Psoas muscle (tissue), 8 donors: ENCODE measurements at regions of chr3 and their contacts with region 1.

Region 1: DNA sequence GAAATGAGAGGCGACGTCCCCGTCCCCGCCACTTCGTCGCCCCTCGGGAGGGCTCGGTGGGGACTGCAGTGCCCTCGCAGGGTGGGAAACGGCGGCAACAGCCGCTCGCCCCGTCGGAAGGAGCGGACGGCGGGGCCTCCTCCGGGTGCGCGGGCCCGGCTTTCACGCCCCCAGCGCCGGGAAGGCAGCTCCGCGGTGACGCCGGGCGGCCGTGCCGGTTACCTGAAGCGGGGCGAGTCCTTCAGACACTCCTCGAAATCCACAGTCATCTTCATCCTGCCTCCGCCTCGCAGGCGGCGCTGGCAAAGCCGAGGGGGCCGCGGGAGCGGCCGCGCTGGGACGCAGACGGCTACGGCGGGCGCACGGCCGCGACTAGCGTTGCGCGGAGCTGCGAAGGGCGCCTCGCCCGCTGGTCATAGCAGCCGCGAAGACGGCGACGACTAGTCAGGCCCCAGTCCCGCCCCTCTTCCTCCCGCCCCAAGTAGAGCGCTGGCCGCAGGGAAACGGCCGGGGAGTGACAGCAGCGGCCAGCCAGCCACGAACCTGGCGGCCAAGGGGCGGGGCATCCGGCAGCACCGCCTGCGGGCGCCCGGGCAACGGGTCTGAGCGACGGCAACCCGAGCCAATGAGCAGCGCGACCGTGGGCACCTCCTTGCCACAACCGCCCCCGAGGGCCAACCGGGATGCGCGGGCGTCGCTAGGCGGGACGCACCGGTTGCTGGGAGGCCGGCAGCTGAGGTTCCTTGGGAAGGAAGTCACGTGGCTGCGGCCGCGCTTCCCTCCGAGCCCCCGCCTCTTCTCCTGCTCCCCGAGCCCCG is at the start of gene ACAP2:
- DNase-seq: peak; percentile 100
- ATAC-seq: peak; percentile 96 to 98 (median 98)
- H3K4me3 ChIP-seq: peak within 1 kb of the TSS; percentile 98
- H3K27ac ChIP-seq: peak within 1 kb of the TSS; percentile 97
- H3K4me1 ChIP-seq: peaks cover 18% of the 10 kb centered on the region
- H3K27me3 ChIP-seq: no peaks in the 10 kb centered on the region
- CTCF ChIP-seq: no peak
- total RNA-seq, gene ACAP2: 10.2 to 12.5 (median 11.2) TPM

Region 2: GRCh38 chr3:195271116-195271858 is 171.5 kb before region 1 on chr3 and contains the start of gene XXYLT1:
- intact Hi-C with region 1: loop called in 1 of 2 experiments (anchors 2 kb)
- DNase-seq: peak; percentile 92 to 94
- ATAC-seq: peak; percentile 96 to 98 (median 98)
- H3K4me3 ChIP-seq: peak within 1 kb of the TSS; percentile 83
- H3K27ac ChIP-seq: peak within 1 kb of the TSS; percentile 83
- H3K4me1 ChIP-seq: peaks cover 12% of the 10 kb centered on the region
- H3K27me3 ChIP-seq: no peaks in the 10 kb centered on the region
- CTCF ChIP-seq: peak; percentile 80
- total RNA-seq, gene XXYLT1: 1.8 to 3.5 (median 2.3) TPM

Region 3: GRCh38 chr3:195394024-195394423 is 48.8 kb before region 1 on chr3:
- intact Hi-C with region 1: loop called in 1 of 2 experiments (anchors 5 kb)
- DNase-seq: no peak
- ATAC-seq: no peak
- H3K4me3 ChIP-seq: no peak overlapping the region
- H3K27ac ChIP-seq: peak overlapping the region; percentile 28
- H3K4me1 ChIP-seq: peaks cover 23% of the 10 kb centered on the region
- H3K27me3 ChIP-seq: no peaks in the 10 kb centered on the region
- CTCF ChIP-seq: no peak

Region 4: GRCh38 chr3:195522254-195523023 is 79.7 kb after region 1 on chr3:
- intact Hi-C with region 1: loop called in 1 of 2 experiments (anchors 5 kb)
- DNase-seq: no peak
- ATAC-seq: no peak
- H3K4me3 ChIP-seq: no peak overlapping the region
- H3K27ac ChIP-seq: no peak overlapping the region
- H3K4me1 ChIP-seq: peaks cover 9% of the 10 kb centered on the region
- H3K27me3 ChIP-seq: no peaks in the 10 kb centered on the region
- CTCF ChIP-seq: peak; percentile 83

Region 5: DNA sequence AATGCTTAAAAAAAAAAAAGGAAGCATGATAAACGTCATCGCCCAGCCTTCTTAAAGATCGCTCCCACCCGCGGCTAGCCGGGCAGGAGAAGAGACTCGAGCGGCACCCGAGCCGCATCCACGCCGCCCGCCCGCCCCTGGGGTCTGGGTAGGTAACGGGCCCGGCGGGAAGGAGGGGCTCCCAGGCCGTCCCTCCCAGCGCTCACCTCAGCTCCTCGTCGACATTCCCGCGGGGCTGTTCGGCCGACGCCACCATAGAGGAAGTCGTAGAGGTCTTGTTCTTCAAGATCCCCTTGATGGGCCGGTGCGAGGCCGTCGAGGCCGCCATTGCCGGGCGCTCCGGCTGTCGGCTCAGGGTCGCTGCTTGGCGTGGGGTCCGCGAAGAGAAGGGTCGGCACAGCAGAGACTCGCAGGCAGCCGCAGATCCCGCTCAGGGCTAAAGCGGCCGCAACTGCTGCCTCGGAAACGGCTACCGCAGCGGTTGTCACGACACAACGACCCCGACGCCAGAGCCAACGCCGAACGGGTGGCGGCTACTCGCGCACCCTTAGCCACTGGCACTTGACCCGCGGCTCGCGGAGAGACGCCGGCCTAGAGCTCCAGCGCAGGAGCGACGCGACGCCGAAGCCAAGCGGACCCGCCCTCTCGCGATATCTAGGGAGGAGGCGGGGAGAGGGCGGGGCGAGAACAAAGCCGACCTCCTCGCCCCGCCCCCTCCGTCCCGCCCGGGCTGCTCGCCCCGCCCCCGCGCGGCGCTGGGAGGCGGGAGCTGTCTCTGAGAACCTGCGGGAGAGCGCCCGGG is 100.1 kb after region 1 on chr3 and contains the start of gene PPP1R2:
- intact Hi-C with region 1: no loop called
- DNase-seq: peak; percentile 94 to 97
- ATAC-seq: peak; percentile 92 to 96 (median 94)
- H3K4me3 ChIP-seq: peak within 1 kb of the TSS; percentile 96
- H3K27ac ChIP-seq: peak within 1 kb of the TSS; percentile 98
- H3K4me1 ChIP-seq: peaks cover 50% of the 10 kb centered on the region
- H3K27me3 ChIP-seq: no peaks in the 10 kb centered on the region
- CTCF ChIP-seq: no peak
- total RNA-seq, gene PPP1R2: 52.3 to 152 (median 91.5) TPM

Region 6: GRCh38 chr3:195886181-195887141 is 443.7 kb after region 1 on chr3:
- intact Hi-C with region 1: no loop called
- DNase-seq: peak; percentile 49 to 70
- ATAC-seq: peak in 3 of 4 donors; percentile 19 to 39 (median 32)
- H3K4me3 ChIP-seq: peak overlapping the region; percentile 35
- H3K27ac ChIP-seq: peak overlapping the region; percentile 91
- H3K4me1 ChIP-seq: peaks cover 67% of the 10 kb centered on the region
- H3K27me3 ChIP-seq: no peaks in the 10 kb centered on the region
- CTCF ChIP-seq: no peak